Esophagus squamous epithelium (tissue), 5 donors: ENCODE measurements at regions of chr19 and their contacts with region 1.

Region 1: DNA sequence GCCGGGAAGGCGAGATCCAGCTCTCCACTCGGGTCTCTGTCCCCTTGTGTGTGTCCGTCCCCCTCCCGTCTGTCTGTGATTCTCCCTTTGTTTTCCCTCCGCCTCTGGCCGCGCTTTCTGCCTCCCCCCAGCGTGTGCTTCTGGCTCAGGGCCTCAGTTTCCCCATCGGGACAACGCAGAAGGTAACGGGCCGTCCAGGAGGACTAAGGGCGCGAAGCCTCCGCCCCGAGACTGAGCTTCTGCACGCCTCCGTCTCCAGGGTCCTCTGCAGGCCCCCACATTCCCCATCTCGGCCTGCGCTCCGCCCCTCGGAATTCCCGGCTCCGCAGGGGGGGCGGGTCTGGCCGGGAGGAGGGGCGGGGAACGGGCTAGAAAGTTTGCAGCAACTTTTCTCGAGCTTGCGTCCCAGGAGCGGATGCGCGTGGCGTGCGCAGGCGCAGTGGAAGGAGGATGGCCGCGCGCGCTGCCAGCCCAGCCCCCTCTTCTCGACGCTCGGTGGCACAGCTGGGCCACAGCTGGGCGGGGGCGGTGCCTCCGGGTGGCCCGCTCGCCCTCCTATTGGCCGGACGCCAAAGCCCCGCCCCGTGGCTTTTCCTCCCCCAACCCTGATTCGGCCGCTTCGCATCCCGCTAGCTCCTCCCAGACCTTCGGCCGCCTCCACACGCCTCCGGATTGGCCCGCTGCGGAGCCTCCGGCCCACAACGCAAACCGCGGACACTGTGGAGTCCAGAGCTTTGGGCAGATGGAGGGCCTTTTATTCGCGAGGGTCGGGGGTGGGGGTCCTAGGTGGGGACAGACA is at the start of gene SIX5:
- DNase-seq: peak; percentile 70
- H3K4me3 ChIP-seq: peak within 1 kb of the TSS; percentile 73 to 79 (median 77)
- H3K27ac ChIP-seq: peak within 1 kb of the TSS; percentile 85 to 98 (median 96)
- H3K4me1 ChIP-seq: peaks cover 25 to 61% (median 38%) of the 10 kb centered on the region in 3 donors
- H3K27me3 ChIP-seq: peaks cover 0 to 8% (median 0%) of the 10 kb centered on the region in 4 donors
- CTCF ChIP-seq: peak in 1 of 6 experiments; percentile 39
- POLR2A ChIP-seq: peak in 3 of 4 donors; percentile 33 to 85 (median 84)
- total RNA-seq, gene SIX5: 5.8 to 13.5 (median 10.1) TPM

Region 2: DNA sequence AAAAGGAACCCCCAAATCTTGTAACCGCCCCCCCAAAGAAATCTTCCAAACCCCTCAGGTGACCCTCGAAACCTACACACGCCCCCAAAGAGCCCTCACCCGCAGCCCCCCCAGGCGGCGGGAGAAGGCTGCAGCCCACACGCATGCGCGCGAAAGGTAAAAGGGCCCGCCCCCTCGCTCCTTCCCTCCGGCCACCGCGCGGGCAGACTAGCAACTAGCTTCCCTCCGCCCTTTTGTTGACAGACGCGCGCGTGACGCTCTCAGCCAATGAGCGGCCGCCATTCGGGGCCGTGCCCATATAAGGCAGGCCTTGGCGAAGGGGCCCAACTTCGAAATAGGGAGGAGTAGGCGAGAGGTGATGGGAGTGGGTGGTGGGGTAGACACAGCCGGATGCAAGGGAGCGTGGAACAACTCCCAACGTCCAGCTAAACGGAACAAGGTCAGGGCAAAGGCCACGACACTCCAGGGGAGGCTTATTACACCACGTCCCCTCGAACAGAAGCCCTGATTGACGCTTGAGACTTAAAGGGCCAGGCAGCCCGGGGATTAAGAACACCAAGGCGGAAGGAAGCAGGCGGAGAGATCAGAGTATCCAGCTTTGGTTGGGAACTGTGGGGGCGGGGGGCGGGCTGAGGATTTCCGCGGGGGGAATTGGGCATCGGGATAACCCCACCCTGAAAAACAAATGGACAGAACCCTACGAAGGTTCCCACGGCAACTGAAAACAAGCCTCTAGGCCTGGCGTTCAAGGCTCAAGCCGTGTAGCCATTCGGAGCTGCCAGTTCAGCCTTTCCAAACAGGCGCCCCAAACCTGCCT is 51.8 kb before region 1 on chr19:
- intact Hi-C with region 1: loop called (anchors 10 kb)
- DNase-seq: peak; percentile 97
- H3K4me3 ChIP-seq: peak overlapping the region; percentile 47 to 72 (median 64)
- H3K27ac ChIP-seq: peak overlapping the region; percentile 87 to 96 (median 92)
- H3K4me1 ChIP-seq: peaks cover 10 to 76% (median 22%) of the 10 kb centered on the region in 3 donors
- H3K27me3 ChIP-seq: no peaks in the 10 kb centered on the region
- CTCF ChIP-seq: peak in 3 of 6 experiments; percentile 19 to 39 (median 31)
- POLR2A ChIP-seq: peak in 3 of 4 donors; percentile 15 to 90 (median 66)